Mammary epithelial cell (primary cell): ENCODE measurements at regions of chr6 and their contacts with region 1.

Region 1: GRCh38 chr6:122798099-122798641 is 9.1 kb downstream of the SMPDL3A start:
- DNase-seq: peak; percentile 87
- H3K4me3 ChIP-seq: no peak overlapping the region
- H3K27ac ChIP-seq: peak overlapping the region; percentile 45
- H3K4me1 ChIP-seq: peaks cover 36% of the 10 kb centered on the region
- H3K27me3 ChIP-seq: no peaks in the 10 kb centered on the region
- CTCF ChIP-seq: no peak

Region 2: GRCh38 chr6:122696079-122696478 is 102.1 kb before region 1 on chr6:
- CTCF ChIA-PET with region 1: no interaction called
- dilution Hi-C with region 1: no loop called
- in situ Hi-C with region 1: no loop called
- intact Hi-C with region 1: no loop called
- DNase-seq: peak; percentile 86
- H3K4me3 ChIP-seq: peak overlapping the region in 1 of 3 experiments; percentile 6
- H3K27ac ChIP-seq: peak overlapping the region; percentile 77
- H3K4me1 ChIP-seq: peaks cover 16% of the 10 kb centered on the region
- H3K27me3 ChIP-seq: no peaks in the 10 kb centered on the region
- CTCF ChIP-seq: no peak

Region 3: GRCh38 chr6:122740936-122741335 is 57.2 kb before region 1 on chr6:
- CTCF ChIA-PET with region 1: no interaction called
- dilution Hi-C with region 1: loop called (anchors 5 kb)
- in situ Hi-C with region 1: no loop called
- intact Hi-C with region 1: no loop called
- DNase-seq: no peak
- H3K4me3 ChIP-seq: no peak overlapping the region
- H3K27ac ChIP-seq: no peak overlapping the region
- H3K4me1 ChIP-seq: peaks cover 4% of the 10 kb centered on the region
- H3K27me3 ChIP-seq: no peaks in the 10 kb centered on the region
- CTCF ChIP-seq: no peak

Region 4: DNA sequence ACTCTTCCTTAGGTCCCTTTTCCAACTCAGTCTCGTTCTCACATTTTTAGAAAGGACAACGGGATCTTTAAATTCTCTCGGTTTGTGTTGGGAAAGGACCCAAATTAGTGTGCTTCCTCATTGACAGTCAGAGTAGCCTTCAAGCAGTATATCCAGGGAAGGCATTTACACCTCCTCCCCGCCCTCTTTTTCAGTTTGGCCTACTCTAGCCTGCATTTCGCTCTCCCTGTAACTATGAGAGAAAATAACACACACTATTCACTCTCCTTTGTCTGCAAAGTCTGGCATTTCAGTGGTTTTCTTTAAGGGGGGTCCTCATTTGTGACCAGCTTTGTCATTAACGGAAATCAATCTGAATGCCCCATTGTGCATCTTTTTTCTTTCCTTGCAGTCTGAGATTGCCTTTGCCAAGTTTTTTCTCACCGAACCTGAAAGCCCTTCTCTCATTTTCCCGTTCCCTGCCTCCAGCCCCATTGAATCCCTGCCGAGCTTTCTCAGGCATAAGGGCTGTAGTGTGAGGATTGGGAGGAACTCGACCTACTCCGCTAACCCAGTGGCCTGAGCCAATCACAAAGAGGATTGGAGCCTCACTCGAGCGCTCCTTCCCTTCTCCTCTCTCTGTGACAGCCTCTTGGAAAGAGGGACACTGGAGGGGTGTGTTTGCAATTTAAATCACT is 19.0 kb before region 1 on chr6:
- CTCF ChIA-PET with region 1: no interaction called
- dilution Hi-C with region 1: no loop called
- in situ Hi-C with region 1: no loop called
- intact Hi-C with region 1: no loop called
- DNase-seq: no peak
- H3K4me3 ChIP-seq: no peak overlapping the region
- H3K27ac ChIP-seq: no peak overlapping the region
- H3K4me1 ChIP-seq: no peaks in the 10 kb centered on the region
- H3K27me3 ChIP-seq: peaks cover 6% of the 10 kb centered on the region
- CTCF ChIP-seq: no peak